Right ventricle myocardium inferior (tissue), 1 donor: ENCODE measurements at regions of chr10 and their contacts with region 1.

Region 1: DNA sequence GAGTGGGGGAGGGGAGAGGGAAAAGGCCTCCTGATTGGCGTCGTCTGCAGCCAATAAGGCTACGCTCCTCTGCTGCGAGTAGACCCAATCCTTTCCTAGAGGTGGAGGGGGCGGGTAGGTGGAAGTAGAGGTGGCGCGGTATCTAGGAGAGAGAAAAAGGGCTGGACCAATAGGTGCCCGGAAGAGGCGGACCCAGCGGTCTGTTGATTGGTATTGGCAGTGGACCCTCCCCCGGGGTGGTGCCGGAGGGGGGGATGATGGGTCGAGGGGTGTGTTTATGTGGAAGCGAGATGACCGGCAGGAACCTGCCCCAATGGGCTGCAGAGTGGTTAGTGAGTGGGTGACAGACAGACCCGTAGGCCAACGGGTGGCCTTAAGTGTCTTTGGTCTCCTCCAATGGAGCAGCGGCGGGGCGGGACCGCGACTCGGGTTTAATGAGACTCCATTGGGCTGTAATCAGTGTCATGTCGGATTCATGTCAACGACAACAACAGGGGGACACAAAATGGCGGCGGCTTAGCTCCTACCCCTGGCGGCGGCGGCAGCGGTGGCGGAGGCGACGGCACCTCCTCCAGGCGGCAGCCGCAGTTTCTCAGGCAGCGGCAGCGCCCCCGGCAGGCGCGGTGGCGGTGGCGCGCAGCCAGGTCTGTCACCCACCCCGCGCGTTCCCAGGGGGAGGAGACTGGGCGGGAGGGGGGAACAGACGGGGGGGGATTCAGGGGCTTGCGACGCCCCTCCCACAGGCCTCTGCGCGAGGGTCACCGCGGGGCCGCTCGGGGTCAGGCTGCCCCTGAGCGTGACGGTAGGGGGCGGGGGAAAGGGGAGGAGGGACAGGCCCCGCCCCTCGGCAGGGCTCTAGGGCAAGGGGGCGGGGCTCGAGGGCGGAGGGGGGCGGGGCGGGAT is at the start of gene KAT6B:
- DNase-seq: peak; percentile 100
- ATAC-seq: peak; percentile 94
- total RNA-seq, gene KAT6B: 42.6 TPM

Region 2: DNA sequence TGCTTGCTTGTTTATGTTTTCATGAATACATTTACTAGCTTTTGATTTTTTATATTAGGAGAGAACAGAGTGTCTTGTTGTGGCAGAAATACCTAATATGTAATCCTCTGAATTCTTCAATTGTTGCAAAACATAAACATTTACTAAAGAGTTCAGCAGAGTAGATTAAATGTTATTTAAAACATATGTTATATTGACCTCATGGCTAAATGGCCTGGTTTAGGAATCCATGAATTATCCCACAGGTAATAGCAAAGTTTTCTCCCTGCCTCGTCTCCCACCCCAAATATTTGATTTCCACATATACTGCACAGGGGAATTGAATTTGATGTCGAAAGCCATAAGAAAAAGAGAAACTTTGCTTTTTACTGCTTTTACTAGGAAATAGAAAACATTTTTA is 563.5 kb before region 1 on chr10:
- intact Hi-C with region 1: loop called (anchors 5 kb)
- DNase-seq: no peak
- ATAC-seq: no peak

Region 3: GRCh38 chr10:74589226-74589673 is 237.1 kb before region 1 on chr10:
- intact Hi-C with region 1: loop called (anchors 2 kb)
- DNase-seq: peak; percentile 88
- ATAC-seq: peak; percentile 93

Region 4: DNA sequence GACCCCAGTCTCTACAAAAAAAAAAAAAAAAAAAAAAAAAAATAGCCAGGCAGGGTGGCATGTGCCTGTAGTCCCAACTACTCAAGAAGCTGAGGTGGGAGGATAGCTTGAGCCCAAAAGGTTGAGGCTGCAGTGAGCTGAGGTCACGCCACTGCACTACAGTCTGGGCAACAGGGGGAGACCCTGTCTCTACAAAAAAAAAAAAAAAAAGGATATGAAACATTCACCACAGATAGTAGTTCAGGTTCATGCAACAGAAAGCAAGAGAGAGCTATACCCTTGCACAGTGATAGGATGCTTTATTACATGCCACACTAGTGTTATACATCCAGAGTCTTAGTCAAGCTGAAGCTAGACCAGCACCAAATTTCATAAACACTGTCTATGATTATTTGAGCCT is 148.4 kb before region 1 on chr10:
- intact Hi-C with region 1: loop called (anchors 10 kb)
- DNase-seq: no peak
- ATAC-seq: no peak

Region 5: GRCh38 chr10:74924251-74924951 is 98.0 kb after region 1 on chr10:
- intact Hi-C with region 1: loop called (anchors 5 kb)
- DNase-seq: no peak
- ATAC-seq: peak; percentile 66

Region 6: GRCh38 chr10:75111367-75111906 is 285.0 kb after region 1 on chr10 and contains the start of gene SAMD8:
- intact Hi-C with region 1: loop called (anchors 5 kb)
- DNase-seq: peak; percentile 99
- ATAC-seq: peak; percentile 93
- total RNA-seq, gene SAMD8: 21.9 TPM